ENCODE measurements at regions of chr7 and their contacts with region 1.

Region 1: GRCh38 chr7:97480772-97481390 is 251.0 kb upstream of the TAC1 start:
- DNase-seq: no peak
- ATAC-seq: no peak

Region 2: DNA sequence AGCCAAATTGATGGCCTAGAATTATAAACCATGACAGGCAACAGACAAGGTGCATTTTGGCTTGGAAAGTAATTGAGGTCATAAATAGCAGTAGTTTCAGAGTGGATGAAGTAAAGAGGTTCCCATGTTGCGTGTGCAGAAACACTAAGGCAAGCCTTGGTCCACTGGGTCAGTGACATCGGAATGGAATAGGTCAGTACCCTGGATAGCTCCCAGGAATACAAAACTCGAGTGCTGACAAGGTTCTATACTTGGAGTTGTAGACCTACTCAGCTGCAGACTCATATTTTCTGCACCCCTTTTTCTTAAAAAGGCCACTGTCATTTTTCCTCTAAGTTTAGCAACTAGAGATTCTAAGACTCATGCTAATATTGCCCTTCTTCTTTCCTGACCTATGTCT is 1575.7 kb before region 1 on chr7:
- intact Hi-C with region 1: loop called (anchors 5 kb)
- DNase-seq: no peak
- ATAC-seq: no peak

Region 3: GRCh38 chr7:97499204-97499603 is 18.3 kb after region 1 on chr7:
- intact Hi-C with region 1: no loop called
- DNase-seq: no peak
- ATAC-seq: no peak

Measured in sciatic nerve (tissue), 2 donors.